ENCODE measurements at regions of chr1 and their contacts with region 1.

Region 1: DNA sequence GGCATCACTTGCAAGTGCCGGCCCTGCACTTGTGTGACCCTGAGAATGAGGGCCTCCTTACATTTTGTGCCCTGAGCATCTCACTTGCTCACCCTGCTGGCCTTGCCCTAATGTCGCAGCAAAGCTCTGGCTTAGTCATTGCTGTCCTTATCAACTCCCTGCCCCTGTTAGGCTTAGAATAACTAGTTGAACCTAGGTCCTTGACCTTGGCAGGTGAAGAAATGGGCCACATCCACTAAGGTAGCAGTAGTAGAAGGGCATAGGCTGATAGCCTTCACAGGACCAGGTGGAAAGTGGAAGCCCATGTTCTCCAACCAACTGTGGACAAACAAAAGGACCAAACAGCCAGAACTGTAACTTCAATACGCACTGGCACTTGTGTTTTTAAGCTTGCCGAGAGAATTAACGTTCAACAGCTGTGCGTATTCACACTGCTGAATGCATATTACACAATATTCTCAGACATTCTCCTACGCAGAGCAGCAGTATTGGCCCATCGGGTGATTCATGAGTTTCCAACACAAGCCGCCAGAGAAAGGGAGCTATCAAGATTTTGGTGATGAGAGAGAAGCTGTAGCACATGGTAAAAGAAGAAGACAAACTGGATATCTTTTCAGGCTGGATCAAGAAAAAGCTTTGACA is 27.7 kb upstream of the PTGFRN start:
- DNase-seq: peak in 2 of 5 donors; percentile 5 to 20
- H3K4me3 ChIP-seq: no peak overlapping the region
- H3K4me3 Mint-ChIP-seq: no peak overlapping the region
- H3K27ac ChIP-seq: no peak overlapping the region
- H3K27ac Mint-ChIP-seq: peak overlapping the region in 1 of 7 donors; percentile 28
- H3K4me1 ChIP-seq: peaks cover 28% of the 10 kb centered on the region
- H3K4me1 Mint-ChIP-seq: peaks cover 0 to 5% (median 2%) of the 10 kb centered on the region in 4 donors
- H3K27me3 ChIP-seq: no peaks in the 10 kb centered on the region
- H3K27me3 Mint-ChIP-seq: no peaks in the 10 kb centered on the region

Region 2: GRCh38 chr1:116724765-116725375 is 157.1 kb before region 1 on chr1:
- CTCF ChIA-PET with region 1: interaction called, 13 read pairs
- POLR2A ChIA-PET with region 1: no interaction called
- intact Hi-C with region 1: no loop called
- DNase-seq: peak; percentile 67 to 81 (median 73)
- H3K4me3 ChIP-seq: no peak overlapping the region
- H3K4me3 Mint-ChIP-seq: no peak overlapping the region
- H3K27ac ChIP-seq: no peak overlapping the region
- H3K27ac Mint-ChIP-seq: peak overlapping the region in 3 of 7 donors; percentile 1 to 47 (median 39)
- H3K4me1 ChIP-seq: peaks cover 13% of the 10 kb centered on the region
- H3K4me1 Mint-ChIP-seq: peaks cover 6 to 27% (median 12%) of the 10 kb centered on the region in 4 donors
- H3K27me3 ChIP-seq: no peaks in the 10 kb centered on the region
- H3K27me3 Mint-ChIP-seq: no peaks in the 10 kb centered on the region

Region 3: DNA sequence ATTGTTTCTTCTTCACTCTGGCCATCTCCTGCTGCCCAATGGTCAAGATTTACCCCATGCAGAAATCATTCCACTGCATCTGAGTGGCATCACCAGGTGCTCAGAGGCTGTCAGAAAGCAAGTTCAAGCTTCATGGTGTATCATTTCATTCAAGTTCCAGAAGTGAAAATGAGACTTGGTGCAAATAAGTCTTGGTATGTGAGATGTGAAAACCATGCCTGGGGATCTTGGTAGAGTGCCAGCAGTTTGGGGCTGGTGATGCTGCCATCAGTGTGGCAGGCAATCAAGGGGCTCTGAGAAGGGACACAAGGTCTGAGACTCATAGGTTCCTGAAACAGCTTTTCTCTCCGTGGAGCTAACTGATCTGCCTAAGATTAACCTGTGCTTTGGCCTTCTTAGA is 75.8 kb before region 1 on chr1:
- CTCF ChIA-PET with region 1: no interaction called
- POLR2A ChIA-PET with region 1: interaction called, 10 read pairs
- intact Hi-C with region 1: no loop called
- DNase-seq: peak in 4 of 5 donors; percentile 57 to 79 (median 58)
- H3K4me3 ChIP-seq: peak overlapping the region in 1 of 2 donors; percentile 29
- H3K4me3 Mint-ChIP-seq: peak overlapping the region; percentile 67 to 96 (median 85)
- H3K27ac ChIP-seq: peak overlapping the region; percentile 80
- H3K27ac Mint-ChIP-seq: peak overlapping the region; percentile 89 to 99 (median 98)
- H3K4me1 ChIP-seq: peaks cover 97% of the 10 kb centered on the region
- H3K4me1 Mint-ChIP-seq: peaks cover 78 to 97% (median 84%) of the 10 kb centered on the region in 4 donors
- H3K27me3 ChIP-seq: no peaks in the 10 kb centered on the region
- H3K27me3 Mint-ChIP-seq: no peaks in the 10 kb centered on the region

Region 4: DNA sequence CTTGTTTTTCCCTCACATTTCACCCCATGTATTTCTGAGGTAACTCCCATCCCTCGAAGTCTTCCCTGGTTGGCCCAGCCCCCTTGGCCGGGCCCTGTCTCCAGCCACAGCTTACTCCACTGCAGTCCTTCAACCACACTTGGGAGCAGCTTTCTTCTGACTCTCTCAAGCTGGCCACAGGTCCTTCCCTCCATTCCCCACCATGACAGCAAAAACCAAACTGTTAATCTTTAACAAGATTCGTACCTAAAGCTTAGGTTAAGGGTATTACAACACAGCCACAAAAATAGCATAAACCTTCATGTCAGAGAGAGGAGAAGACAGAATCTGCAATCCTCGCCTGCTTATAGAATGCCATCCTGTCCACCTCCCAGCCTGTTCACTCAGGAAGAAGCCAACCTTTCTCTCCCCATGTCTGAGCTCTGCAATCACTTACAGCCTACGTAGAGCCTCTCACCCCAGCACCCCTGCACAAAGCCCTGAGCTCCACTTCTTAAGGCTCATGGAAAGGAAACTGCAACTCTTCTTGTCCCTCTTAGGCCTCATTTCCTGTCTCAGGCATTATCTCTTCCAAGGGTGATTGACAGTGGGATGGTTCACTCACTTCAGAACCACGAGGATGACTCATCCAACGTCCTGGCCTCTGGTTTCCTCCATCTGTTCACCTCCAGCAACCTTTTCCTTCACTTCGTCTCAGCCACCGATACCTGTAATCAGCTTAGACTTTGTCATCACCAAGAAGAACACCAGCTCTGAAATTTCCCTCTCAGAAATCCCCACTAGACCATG is 55.0 kb before region 1 on chr1:
- CTCF ChIA-PET with region 1: interaction called, 3 read pairs
- POLR2A ChIA-PET with region 1: interaction called, 11 read pairs
- intact Hi-C with region 1: no loop called
- DNase-seq: peak in 3 of 5 donors; percentile 23 to 84 (median 38)
- H3K4me3 ChIP-seq: no peak overlapping the region
- H3K4me3 Mint-ChIP-seq: peak overlapping the region in 4 of 8 donors; percentile 48 to 66 (median 54)
- H3K27ac ChIP-seq: peak overlapping the region; percentile 27
- H3K27ac Mint-ChIP-seq: peak overlapping the region; percentile 71 to 90 (median 88)
- H3K4me1 ChIP-seq: peaks cover 21% of the 10 kb centered on the region
- H3K4me1 Mint-ChIP-seq: peaks cover 16 to 31% (median 24%) of the 10 kb centered on the region in 4 donors
- H3K27me3 ChIP-seq: no peaks in the 10 kb centered on the region
- H3K27me3 Mint-ChIP-seq: no peaks in the 10 kb centered on the region

Region 5: DNA sequence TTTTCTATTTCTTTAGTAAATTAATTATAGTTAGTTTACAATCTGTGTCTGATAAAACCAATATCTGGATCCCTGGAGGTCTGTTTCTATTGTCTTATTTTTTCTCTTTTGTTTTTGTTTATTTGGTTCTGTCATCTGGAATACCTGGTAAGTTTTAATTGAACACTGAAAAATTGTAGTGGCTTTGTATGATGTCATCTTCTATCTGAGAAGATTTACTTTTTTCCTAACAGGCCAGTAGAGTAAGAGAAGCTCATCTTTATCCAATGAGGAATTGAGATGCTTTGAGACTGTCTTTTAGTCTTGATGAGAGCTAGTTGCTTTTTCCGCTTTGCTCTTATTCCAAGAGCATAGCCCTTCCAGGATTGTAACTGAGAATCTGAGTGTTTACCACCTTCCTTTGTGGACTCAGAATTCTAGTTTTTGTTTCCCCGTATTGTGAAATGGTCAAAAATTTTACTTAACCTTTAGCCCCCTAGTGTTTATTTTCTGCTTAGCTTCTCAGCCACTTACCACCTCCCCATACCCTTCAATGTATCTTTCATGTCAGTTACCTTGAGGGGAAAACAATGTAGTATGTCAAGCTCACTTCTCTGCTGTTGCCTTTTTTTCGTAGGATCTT is 52.7 kb after region 1 on chr1:
- CTCF ChIA-PET with region 1: interaction called, 5 read pairs
- POLR2A ChIA-PET with region 1: interaction called, 5 read pairs
- intact Hi-C with region 1: loop called (anchors 5 kb)
- DNase-seq: peak in 4 of 5 donors; percentile 26 to 37 (median 34)
- H3K4me3 ChIP-seq: no peak overlapping the region
- H3K4me3 Mint-ChIP-seq: peak overlapping the region in 1 of 8 donors; percentile 39
- H3K27ac ChIP-seq: no peak overlapping the region
- H3K27ac Mint-ChIP-seq: peak overlapping the region in 6 of 7 donors; percentile 45 to 96 (median 88)
- H3K4me1 ChIP-seq: peaks cover 27% of the 10 kb centered on the region
- H3K4me1 Mint-ChIP-seq: peaks cover 18 to 26% (median 22%) of the 10 kb centered on the region in 4 donors
- H3K27me3 ChIP-seq: no peaks in the 10 kb centered on the region
- H3K27me3 Mint-ChIP-seq: no peaks in the 10 kb centered on the region